A549 (cell line): ENCODE measurements at regions of chr1 and their contacts with region 1.

Region 1: DNA sequence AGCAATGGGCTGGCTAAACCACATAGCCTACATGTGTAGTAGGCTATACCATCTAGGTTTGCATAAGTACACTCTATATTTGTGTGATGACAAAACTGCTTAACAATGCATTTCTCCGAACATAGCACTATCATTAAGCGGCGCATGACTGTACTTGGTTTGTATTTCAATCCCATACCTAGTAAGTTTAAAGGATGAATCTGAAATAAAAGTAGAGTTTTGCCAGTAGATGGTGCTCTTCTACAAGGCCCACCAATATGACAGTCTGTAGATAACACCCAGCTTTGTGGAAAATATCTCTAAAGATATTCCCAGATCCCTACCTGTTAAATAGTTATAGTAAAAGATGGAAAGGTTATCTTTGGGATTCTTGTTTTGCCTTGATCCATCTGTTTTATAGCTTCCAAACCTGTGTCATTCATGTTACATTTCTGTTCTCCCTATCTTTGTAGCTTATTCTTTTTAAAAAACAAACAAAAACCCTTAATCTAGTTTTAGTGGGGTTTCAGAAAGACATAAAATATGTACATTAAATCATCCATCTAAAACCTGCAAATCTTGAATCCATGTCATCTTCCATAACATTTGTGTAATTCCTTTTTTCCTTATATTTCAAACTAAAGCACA is 33.9 kb upstream of the ASPM start:
- DNase-seq: peak; percentile 33 to 69
- ATAC-seq: peak; percentile 90 to 94
- H3K4me3 ChIP-seq: no peak overlapping the region
- H3K27ac ChIP-seq: peak overlapping the region; percentile 65 to 78; a peak in 3 of 6 replicates
- H3K4me1 ChIP-seq: peaks cover 25% of the 10 kb centered on the region
- CTCF ChIP-seq: peak; percentile 83
- EP300 ChIP-seq: no peak
- POLR2A ChIP-seq: no peak
- RAD21 ChIP-seq: peak; percentile 75 to 79

Region 2: GRCh38 chr1:197024460-197024859 is 155.9 kb before region 1 on chr1:
- CTCF ChIA-PET with region 1: no interaction called
- POLR2A ChIA-PET with region 1: no interaction called
- DNase-seq: peak in 1 of 2 experiments; percentile 78
- ATAC-seq: peak; percentile 70 to 79
- H3K4me3 ChIP-seq: no peak overlapping the region
- H3K27ac ChIP-seq: peak overlapping the region; percentile 56 to 70; a peak in 4 of 6 replicates
- H3K4me1 ChIP-seq: peaks cover 18% of the 10 kb centered on the region
- CTCF ChIP-seq: no peak
- EP300 ChIP-seq: peak; percentile 30 to 33; a peak in 2 of 5 replicates
- POLR2A ChIP-seq: no peak
- RAD21 ChIP-seq: no peak

Region 3: DNA sequence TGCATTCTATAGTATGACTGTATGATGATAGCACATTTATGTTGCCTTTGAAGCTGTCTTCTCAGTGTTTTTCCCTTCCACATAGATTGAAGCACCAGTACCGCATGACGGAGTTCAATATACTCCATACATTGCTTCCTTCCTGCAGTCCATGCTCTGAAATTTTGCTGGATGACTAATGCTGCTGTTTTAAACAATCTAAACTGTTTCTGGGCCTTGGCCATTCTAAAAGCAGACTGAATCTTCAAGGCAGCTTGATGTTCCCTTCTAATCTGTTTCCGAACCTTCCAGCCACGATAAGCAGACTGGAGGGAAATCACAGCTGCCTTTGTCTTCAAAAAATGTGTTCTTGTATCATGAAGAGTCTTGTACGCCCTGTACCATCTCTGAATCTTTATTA is 77.1 kb before region 1 on chr1:
- CTCF ChIA-PET with region 1: no interaction called
- POLR2A ChIA-PET with region 1: no interaction called
- DNase-seq: no peak
- ATAC-seq: no peak
- H3K4me3 ChIP-seq: no peak overlapping the region
- H3K27ac ChIP-seq: no peak overlapping the region
- H3K4me1 ChIP-seq: no peaks in the 10 kb centered on the region
- CTCF ChIP-seq: no peak
- EP300 ChIP-seq: no peak
- POLR2A ChIP-seq: no peak
- RAD21 ChIP-seq: no peak

Region 4: GRCh38 chr1:197336571-197336970 is 156.2 kb after region 1 on chr1:
- CTCF ChIA-PET with region 1: interaction called, 14 read pairs
- POLR2A ChIA-PET with region 1: no interaction called
- DNase-seq: no peak
- ATAC-seq: no peak
- H3K4me3 ChIP-seq: no peak overlapping the region
- H3K27ac ChIP-seq: no peak overlapping the region
- H3K4me1 ChIP-seq: no peaks in the 10 kb centered on the region
- CTCF ChIP-seq: no peak
- EP300 ChIP-seq: no peak
- POLR2A ChIP-seq: no peak
- RAD21 ChIP-seq: no peak